Activated T-helper 1 cell treated with anti-CD3 and anti-CD28 coated beads, Interleukin-12 subunit alpha, Interleukin-12 subunit beta, Interleukin-2, Interleukin-4 antibody, amounts not matched to agents 30 ng/mL and 10 ng/mL and 1 ng/mL, durations not matched to agents 14 hours and 24 hours and 36 hours (primary cell): ENCODE measurements at regions of chr1 and their contacts with region 1.

Region 1: DNA sequence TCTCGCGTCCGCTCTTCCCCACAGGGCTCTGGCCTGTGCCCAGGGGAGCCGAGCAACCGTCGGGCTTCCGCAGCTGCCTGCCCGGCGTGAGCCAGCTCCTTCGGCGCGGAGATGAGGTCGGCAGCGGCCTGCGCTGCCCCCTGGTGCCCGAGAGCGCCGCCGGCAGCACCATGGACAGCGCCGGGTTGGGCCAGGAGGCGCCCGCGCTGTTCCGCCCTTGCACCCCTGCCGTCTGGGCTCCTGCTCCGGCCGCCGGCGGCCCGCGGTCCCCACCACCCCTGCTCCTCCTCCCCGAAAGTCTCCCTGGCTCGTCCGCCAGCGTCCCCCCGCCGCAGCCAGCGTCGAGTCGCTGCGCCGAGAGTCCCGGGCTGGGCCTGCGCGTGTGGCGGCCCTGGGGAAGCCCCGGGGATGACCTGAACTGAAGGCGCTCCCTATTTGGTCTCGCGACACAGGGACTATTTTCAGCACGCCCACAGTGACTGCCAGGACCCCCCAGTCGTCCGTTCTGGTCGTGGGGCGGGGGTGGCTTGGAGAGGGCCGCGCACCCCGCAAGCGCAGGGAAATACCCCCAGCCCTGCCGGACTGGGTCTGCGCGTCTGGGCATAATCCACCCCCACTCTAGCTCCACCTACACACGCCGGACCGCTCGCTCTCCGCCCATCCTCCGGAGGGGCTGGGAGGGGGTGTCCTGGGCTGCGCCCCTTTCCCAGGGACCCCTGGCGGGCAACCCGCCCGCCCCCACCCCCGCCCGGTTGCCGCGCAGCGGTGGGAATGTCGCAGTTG is 1.3 kb downstream of the HES3 start:
- DNase-seq: peak; percentile 77
- H3K4me3 Mint-ChIP-seq: no peak overlapping the region
- H3K27ac Mint-ChIP-seq: no peak overlapping the region
- H3K4me1 Mint-ChIP-seq: peaks cover 11% of the 10 kb centered on the region
- H3K27me3 Mint-ChIP-seq: peaks cover 55% of the 10 kb centered on the region

Region 2: DNA sequence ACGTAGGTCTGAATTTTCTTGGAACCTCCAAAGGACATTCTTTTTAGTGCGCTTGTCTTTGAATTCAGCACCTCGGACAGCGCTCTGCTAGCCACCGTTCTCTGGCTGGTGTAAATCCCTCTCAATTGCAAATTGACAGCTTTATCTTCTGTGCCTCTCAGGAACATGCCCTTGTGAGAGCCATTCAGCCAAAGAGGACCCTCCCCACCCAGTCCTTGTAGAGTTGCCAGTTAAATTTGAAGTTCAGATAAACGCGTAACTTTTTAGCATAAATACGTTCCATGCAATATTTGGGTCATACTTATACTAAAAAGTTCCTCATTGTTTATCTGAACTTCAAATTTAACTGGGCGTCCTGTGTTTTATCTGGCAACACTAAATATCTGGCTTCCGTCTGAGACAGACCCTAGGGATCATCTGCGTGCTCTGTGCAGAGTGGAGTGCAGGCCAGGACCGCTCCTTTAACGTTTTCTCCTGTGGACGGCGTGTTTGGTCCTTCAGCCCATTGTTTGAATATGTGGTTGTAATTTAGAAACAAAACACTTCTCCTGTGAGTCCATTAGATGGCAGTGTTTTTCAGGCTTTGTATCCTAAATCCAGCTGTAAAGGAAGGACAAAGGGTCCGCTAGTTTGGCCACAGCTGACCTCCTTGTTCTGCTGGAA is 192.6 kb before region 1 on chr1:
- intact Hi-C with region 1: loop called (anchors 2 kb)
- DNase-seq: peak; percentile 25
- H3K4me3 Mint-ChIP-seq: no peak overlapping the region
- H3K27ac Mint-ChIP-seq: no peak overlapping the region
- H3K4me1 Mint-ChIP-seq: peaks cover 8% of the 10 kb centered on the region
- H3K27me3 Mint-ChIP-seq: peaks cover 1% of the 10 kb centered on the region

Region 3: GRCh38 chr1:6259491-6260425 is 14.5 kb after region 1 on chr1:
- intact Hi-C with region 1: loop called (anchors 2 kb)
- DNase-seq: peak; percentile 80
- H3K4me3 Mint-ChIP-seq: peak overlapping the region; percentile 46
- H3K27ac Mint-ChIP-seq: no peak overlapping the region
- H3K4me1 Mint-ChIP-seq: no peaks in the 10 kb centered on the region
- H3K27me3 Mint-ChIP-seq: peaks cover 12% of the 10 kb centered on the region

Region 4: GRCh38 chr1:6401673-6402072 is 156.4 kb after region 1 on chr1:
- intact Hi-C with region 1: loop called (anchors 1 kb)
- DNase-seq: no peak
- H3K4me3 Mint-ChIP-seq: no peak overlapping the region
- H3K27ac Mint-ChIP-seq: no peak overlapping the region
- H3K4me1 Mint-ChIP-seq: peaks cover 7% of the 10 kb centered on the region
- H3K27me3 Mint-ChIP-seq: peaks cover 20% of the 10 kb centered on the region

Region 5: DNA sequence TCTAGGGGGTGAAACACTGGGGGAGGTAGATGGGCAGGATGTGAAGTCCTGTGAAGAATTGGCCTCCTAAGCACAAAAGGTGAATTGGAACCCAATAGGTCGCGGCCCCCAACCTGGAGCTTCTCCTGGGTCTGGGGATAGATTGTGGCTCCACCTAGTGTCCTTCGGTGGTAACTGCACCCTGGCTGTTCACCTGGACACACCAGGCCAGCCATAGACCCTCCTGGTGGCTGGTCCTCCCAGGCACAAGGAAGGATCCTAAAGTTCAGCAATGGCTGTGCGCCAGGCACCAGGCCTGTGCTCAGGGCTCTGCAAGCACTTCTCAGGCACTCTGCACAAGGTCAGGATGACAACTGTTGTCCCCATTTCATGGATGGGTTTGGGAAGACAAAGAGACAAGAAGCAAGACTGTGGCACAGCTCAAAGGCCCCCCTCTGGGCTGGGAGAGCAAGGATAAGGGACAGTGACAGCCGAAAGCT is 192.8 kb after region 1 on chr1:
- intact Hi-C with region 1: loop called (anchors 1 kb)
- DNase-seq: peak; percentile 61
- H3K4me3 Mint-ChIP-seq: no peak overlapping the region
- H3K27ac Mint-ChIP-seq: no peak overlapping the region
- H3K4me1 Mint-ChIP-seq: peaks cover 5% of the 10 kb centered on the region
- H3K27me3 Mint-ChIP-seq: peaks cover 46% of the 10 kb centered on the region